Activated naive CD4-positive, alpha-beta T cell treated with anti-CD3 and anti-CD28 coated beads for 36 hours (primary cell): ENCODE measurements at regions of chr19 and their contacts with region 1.

Region 1: DNA sequence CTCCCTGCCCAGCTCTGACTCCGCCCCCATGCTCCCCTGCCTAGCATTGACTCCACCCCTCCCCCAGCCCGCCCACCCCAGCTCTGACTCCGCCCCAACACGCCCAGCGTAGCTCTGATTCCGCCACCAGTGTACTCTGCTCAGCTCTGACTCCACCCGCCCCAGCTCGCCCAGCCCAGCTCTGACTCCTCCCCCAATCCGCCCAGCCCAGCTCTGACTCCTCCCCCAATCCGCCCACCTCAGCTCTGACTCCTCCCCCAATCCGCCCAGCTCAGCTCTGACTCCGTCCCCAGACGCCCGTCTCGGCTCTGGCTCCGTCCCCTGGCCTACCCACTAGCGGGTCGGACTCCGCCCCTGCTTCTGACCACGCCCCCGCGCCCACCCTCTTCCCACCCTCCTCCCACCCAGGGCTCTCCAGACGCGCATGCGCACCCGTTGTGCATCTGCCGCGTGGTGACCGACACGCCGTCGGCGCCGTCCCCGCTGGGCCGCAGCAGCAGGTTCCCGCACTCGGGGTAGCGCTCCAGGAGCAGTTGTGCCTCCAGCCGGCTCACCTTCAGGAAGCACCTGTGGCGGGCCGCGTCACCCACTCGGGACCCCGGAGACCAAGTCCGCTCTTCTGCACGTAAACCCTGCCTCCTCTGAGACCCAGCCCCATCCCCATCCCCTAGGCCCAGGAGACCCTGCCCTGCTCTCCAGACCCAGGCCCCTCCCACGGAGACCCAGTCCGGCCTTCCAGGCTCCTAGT is 10.2 kb downstream of the STAP2 start:
- DNase-seq: peak; percentile 97
- H3K4me3 Mint-ChIP-seq: peak overlapping the region; percentile 87
- H3K27ac Mint-ChIP-seq: peak overlapping the region; percentile 84
- H3K4me1 Mint-ChIP-seq: peaks cover 27% of the 10 kb centered on the region
- H3K27me3 Mint-ChIP-seq: no peaks in the 10 kb centered on the region

Region 2: GRCh38 chr19:4288091-4288777 is 40.2 kb before region 1 on chr19:
- CTCF ChIA-PET with region 1: no interaction called
- intact Hi-C with region 1: no loop called
- DNase-seq: no peak
- H3K4me3 Mint-ChIP-seq: no peak overlapping the region
- H3K27ac Mint-ChIP-seq: no peak overlapping the region
- H3K4me1 Mint-ChIP-seq: no peaks in the 10 kb centered on the region
- H3K27me3 Mint-ChIP-seq: no peaks in the 10 kb centered on the region

Region 3: DNA sequence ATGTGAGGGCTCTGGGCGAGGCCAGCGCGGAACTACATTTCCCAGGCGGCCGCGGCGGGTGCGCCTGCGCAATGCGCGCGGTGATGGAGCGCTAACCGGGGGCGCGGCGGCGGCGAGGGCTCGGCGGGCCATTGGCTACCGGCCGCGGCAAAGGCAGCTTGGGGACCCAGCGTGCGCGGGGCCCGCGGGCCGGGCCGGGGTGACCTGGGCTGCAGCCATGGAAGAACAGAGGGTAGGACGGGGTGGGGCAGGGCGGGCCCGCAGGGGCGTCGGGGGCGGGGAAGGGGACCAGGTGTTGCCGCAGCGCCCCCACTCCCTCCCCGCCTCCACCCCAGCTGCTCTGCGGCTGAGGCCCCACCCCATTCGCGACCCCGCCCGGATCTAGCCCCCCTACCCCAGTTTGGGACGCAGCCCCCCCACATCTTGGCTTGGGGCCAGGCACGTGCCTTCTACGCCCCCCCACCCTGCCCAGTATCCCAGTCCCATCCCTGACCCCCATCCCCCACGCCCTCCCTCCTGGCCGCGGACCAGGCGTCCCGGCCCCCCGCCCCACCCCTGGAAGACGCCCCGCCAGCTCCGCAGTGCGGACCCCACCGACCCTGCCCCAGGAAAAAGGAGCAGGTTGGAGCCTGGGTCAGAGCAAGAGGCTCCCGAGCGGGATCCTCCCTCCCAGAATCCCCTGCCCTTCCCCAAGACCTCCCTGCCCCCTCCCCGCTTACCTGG is 23.7 kb before region 1 on chr19 and contains the start of gene FSD1:
- CTCF ChIA-PET with region 1: no interaction called
- intact Hi-C with region 1: loop called (anchors 2 kb)
- DNase-seq: peak; percentile 79
- H3K4me3 Mint-ChIP-seq: peak within 1 kb of the TSS; percentile 71
- H3K27ac Mint-ChIP-seq: peak within 1 kb of the TSS; percentile 84
- H3K4me1 Mint-ChIP-seq: peaks cover 34% of the 10 kb centered on the region
- H3K27me3 Mint-ChIP-seq: no peaks in the 10 kb centered on the region
- total RNA-seq, gene FSD1: 12.3 to 17.5 TPM

Region 4: GRCh38 chr19:4444765-4445741 is 116.6 kb after region 1 on chr19:
- CTCF ChIA-PET with region 1: no interaction called
- intact Hi-C with region 1: no loop called
- DNase-seq: no peak
- H3K4me3 Mint-ChIP-seq: no peak overlapping the region
- H3K27ac Mint-ChIP-seq: no peak overlapping the region
- H3K4me1 Mint-ChIP-seq: peaks cover 4% of the 10 kb centered on the region
- H3K27me3 Mint-ChIP-seq: no peaks in the 10 kb centered on the region